ENCODE measurements at regions of chr11 and their contacts with region 1.

Region 1: GRCh38 chr11:65569973-65570918 is at the start of gene ZNRD2:
- DNase-seq: peak; percentile 93
- ATAC-seq: peak; percentile 68
- H3K4me3 Mint-ChIP-seq: peak within 1 kb of the TSS; percentile 99
- H3K27ac Mint-ChIP-seq: peak within 1 kb of the TSS; percentile 99
- H3K4me1 Mint-ChIP-seq: peaks cover 78% of the 10 kb centered on the region
- H3K27me3 Mint-ChIP-seq: no peaks in the 10 kb centered on the region
- CTCF ChIP-seq: no peak
- total RNA-seq, gene ZNRD2: 40.9 and 41.0 TPM in 2 replicates

Region 2: GRCh38 chr11:65224930-65225278 is 345.3 kb before region 1 on chr11:
- CTCF ChIA-PET with region 1: no interaction called
- POLR2A ChIA-PET with region 1: no interaction called
- intact Hi-C with region 1: no loop called
- DNase-seq: no peak
- ATAC-seq: no peak
- H3K4me3 Mint-ChIP-seq: peak overlapping the region; percentile 83
- H3K27ac Mint-ChIP-seq: no peak overlapping the region
- H3K4me1 Mint-ChIP-seq: peaks cover 17% of the 10 kb centered on the region
- H3K27me3 Mint-ChIP-seq: no peaks in the 10 kb centered on the region
- CTCF ChIP-seq: no peak

Region 3: DNA sequence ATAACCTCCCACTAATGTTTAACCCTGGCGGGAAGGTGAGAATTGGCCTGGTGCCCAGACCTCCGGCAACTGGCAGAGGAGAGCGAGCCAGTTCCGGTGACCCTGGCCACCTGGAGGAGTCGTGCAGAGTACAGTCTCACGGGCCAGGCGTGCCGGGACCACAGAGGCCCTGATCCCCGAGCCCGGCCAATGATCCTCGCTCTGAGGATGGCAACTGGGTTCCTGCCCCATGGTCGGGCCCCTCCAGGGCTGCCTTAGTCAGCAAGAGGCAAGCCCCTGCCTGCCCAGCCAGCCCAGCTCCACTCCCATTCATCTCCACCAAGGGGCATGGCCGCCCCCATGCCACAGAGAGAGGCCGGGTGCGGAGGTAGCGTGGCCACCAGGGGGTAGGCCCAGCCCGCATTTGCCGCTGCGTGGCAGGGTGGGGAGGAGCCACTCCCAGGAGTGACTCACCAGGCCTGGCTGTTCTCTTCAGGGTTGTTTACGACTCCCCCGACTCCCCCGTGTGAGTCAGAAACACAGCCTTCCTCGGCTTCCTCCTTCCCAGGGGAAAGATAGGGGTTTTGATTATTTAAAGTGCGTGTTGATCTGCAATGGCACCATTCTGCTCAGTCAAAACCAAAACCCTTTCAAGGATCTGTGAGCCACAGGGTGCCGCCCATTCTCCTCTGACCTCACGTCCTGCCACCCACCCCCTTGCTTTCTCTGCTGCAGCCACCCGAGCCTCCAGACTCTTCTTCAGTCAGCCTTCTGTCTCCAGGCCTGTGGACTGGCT is 188.0 kb before region 1 on chr11 and contains the start of gene SLC25A45:
- CTCF ChIA-PET with region 1: no interaction called
- POLR2A ChIA-PET with region 1: interaction called, 3 read pairs
- intact Hi-C with region 1: loop called (anchors 1 kb)
- DNase-seq: peak; percentile 84
- ATAC-seq: peak; percentile 84
- H3K4me3 Mint-ChIP-seq: peak within 1 kb of the TSS; percentile 82
- H3K27ac Mint-ChIP-seq: peak within 1 kb of the TSS; percentile 94
- H3K4me1 Mint-ChIP-seq: peaks cover 67% of the 10 kb centered on the region
- H3K27me3 Mint-ChIP-seq: no peaks in the 10 kb centered on the region
- CTCF ChIP-seq: no peak
- total RNA-seq, gene SLC25A45: 11.4 and 12.3 TPM in 2 replicates

Region 4: GRCh38 chr11:65540297-65541092 is 29.8 kb before region 1 on chr11:
- CTCF ChIA-PET with region 1: interaction called, 40 read pairs
- POLR2A ChIA-PET with region 1: interaction called, 34 read pairs
- intact Hi-C with region 1: loop called (anchors 1 kb)
- DNase-seq: peak; percentile 88
- ATAC-seq: peak; percentile 88
- H3K4me3 Mint-ChIP-seq: peak overlapping the region; percentile 88
- H3K27ac Mint-ChIP-seq: peak overlapping the region; percentile 86
- H3K4me1 Mint-ChIP-seq: peaks cover 22% of the 10 kb centered on the region
- H3K27me3 Mint-ChIP-seq: no peaks in the 10 kb centered on the region
- CTCF ChIP-seq: no peak

Region 5: GRCh38 chr11:65558002-65558931 is 12.0 kb before region 1 on chr11 and contains the start of gene LTBP3:
- CTCF ChIA-PET with region 1: interaction called, 4 read pairs
- POLR2A ChIA-PET with region 1: interaction called, 14 read pairs
- intact Hi-C with region 1: loop called (anchors 1 kb)
- DNase-seq: peak; percentile 44
- ATAC-seq: peak; percentile 61
- H3K4me3 Mint-ChIP-seq: peak within 1 kb of the TSS; percentile 79
- H3K27ac Mint-ChIP-seq: peak within 1 kb of the TSS; percentile 72
- H3K4me1 Mint-ChIP-seq: peaks cover 29% of the 10 kb centered on the region
- H3K27me3 Mint-ChIP-seq: peaks cover 4% of the 10 kb centered on the region
- CTCF ChIP-seq: no peak
- total RNA-seq, gene LTBP3: 25.0 and 25.3 TPM in 2 replicates

Region 6: DNA sequence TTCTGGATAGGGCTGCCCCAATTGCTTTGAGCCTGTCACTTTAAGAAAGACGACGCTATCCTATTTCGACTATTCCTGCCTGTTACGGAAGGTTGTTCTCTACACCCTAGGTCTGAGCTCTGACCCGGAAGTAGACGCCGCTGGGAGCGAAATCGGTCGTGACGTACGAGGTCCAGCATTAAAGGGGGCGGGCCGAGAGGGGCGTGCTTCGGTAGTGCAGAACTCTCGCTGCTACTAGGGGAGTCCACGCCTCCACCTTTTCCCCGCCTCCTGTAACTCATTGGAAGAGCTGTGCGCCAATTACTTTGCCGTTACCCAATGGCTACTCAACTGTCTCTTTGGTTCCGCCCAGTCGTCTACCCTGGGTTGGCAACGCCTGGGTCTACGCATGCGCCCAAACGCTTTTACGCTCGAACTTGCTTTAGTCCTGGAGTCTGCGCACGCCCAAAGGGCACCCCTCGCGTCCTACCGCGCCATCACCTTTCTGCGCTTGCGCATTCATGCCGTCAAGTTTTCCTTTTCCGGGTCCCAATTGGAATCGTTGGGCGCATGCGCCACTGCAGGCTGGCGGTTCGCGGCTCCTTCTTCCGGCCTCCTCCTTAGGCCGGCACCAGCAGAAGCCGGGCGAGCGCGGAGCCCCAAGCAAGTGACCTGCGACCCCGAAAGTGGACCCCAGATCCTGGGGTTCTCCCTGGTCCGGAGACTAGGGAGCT is 45.1 kb after region 1 on chr11 and contains the start of gene PCNX3:
- CTCF ChIA-PET with region 1: interaction called, 5 read pairs
- POLR2A ChIA-PET with region 1: interaction called, 62 read pairs
- intact Hi-C with region 1: loop called (anchors 1 kb)
- DNase-seq: peak; percentile 96
- ATAC-seq: peak; percentile 90
- H3K4me3 Mint-ChIP-seq: peak within 1 kb of the TSS; percentile 97
- H3K27ac Mint-ChIP-seq: peak within 1 kb of the TSS; percentile 96
- H3K4me1 Mint-ChIP-seq: peaks cover 58% of the 10 kb centered on the region
- H3K27me3 Mint-ChIP-seq: no peaks in the 10 kb centered on the region
- CTCF ChIP-seq: no peak
- total RNA-seq, gene PCNX3: 45.3 and 51.4 TPM in 2 replicates

Measured in activated B cell treated with CpG ODN at 0.5 μM for 24 hours (primary cell).